ENCODE measurements at regions of chr12 and their contacts with region 1.

Region 1: GRCh38 chr12:132003846-132004245 is 54.1 kb downstream of the EP400 start:
- DNase-seq: no peak

Region 2: DNA sequence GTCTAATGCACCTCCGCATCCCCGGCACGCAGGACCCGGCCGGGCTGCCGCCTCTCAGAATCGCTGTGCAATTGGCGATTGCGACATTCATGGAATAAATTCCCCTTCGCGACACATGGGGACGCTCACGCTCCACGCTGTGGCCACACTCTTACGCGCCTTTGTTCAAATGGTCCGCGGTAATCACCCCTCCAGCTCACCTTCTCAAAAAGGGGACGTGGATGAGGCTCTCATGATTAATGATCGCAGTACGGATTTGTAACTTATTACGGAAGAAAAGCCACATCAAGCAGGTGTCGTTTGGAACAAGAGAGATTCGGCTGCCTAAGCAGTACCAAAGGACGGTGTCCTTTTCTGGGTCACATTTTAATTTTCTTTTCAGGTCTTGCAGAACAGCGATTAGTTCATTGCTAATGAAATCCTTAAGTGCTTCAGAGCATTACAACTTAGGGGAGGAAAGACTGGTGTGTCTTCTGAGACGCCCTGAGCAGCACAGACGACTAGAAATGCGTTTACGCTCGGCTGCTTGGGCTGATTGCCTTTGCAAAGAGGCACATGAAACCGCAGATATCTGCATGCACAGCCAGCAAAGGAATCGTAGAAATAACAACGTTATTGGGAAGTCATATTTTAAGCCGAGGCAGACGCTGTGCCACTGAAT is 1087.5 kb before region 1 on chr12:
- intact Hi-C with region 1: loop called (anchors 10 kb)
- DNase-seq: peak; percentile 55 to 95 (median 70)

Region 3: DNA sequence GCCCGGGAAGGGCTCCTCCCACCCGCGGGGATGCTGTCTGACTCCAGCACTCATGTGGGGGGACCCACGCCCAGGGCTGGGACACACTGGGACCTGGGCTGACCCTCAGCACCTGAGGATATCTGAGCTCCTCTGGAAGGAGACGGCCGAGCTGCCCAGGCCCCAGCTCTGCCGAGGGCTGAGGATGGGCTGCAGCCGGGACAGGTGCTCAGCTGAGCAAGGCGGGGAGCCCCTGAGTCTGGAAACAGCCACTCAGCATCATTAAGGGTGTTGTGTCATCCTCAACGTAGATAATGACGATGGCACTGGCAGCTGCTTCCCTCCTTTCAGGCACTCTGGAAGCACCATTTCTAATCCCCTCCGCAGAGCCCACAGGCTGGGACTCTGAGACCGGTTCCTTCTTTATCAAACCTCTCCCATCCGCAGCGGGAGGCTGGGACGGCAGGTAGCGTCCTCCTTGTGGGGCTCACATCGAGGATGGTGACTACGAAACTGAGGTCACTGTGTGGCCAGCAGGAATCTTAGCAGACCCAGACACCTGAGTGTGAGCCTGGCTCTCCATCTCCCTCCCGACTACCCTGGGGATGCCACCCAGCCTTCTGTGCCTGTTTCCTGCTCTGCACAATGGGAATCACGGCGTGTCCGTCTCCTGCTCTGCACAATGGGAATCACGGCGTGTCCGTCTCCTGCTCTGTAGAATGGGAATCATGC is 319.7 kb before region 1 on chr12:
- intact Hi-C with region 1: no loop called
- DNase-seq: peak in 1 of 10 donors; percentile 52

Region 4: GRCh38 chr12:131850856-131851559 is 152.8 kb before region 1 on chr12:
- intact Hi-C with region 1: loop called (anchors 2 kb)
- DNase-seq: peak in 3 of 10 donors; percentile 44 to 63 (median 51)

Region 5: DNA sequence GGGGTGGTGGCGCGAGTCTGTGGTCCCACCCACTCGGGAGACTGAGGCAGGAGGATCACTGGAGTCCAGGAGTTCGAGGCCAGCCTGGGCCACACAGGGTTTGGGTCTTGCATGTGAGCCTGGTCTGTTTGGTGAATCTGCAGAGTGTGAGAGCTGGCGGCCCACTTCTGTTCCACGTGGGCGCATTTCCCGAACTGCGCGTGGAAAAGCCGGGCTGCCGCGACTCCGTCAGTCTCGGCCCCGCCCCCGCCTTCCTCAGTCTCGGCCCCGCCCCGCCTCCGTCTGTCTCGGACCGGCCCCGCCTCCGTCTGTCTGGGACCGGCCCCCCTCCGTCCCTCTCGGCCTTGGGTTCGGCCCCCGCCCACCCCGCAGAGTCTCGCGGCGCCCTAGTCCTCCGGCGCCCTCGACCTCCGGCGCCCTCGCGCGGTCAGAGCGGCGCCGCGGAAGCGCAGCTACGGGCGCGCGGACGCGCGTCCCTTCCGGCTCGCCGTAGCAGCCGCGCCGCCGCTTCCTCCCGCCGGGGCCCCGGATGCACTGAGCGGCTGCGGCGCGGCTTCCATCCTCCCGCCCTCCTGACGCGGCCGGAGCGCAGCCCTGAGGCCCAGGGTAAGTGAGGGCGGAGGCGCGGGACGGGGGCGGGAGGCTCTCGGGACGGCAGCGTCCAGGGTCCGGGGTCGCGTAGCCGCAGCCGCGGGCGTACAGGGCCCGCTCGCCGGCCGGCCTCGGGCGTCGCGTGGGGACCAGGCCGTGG is 54.2 kb before region 1 on chr12 and contains the start of gene EP400:
- intact Hi-C with region 1: no loop called
- DNase-seq: peak; percentile 86 to 98 (median 90)